ENCODE measurements at regions of chr2 and their contacts with region 1.

Region 1: GRCh38 chr2:112821142-112821541 is 15.4 kb downstream of the IL1B start:
- DNase-seq: peak; percentile 80
- H3K4me3 Mint-ChIP-seq: no peak overlapping the region
- H3K27ac Mint-ChIP-seq: peak overlapping the region; percentile 87
- H3K4me1 Mint-ChIP-seq: peaks cover 28% of the 10 kb centered on the region
- H3K27me3 Mint-ChIP-seq: no peaks in the 10 kb centered on the region

Region 2: DNA sequence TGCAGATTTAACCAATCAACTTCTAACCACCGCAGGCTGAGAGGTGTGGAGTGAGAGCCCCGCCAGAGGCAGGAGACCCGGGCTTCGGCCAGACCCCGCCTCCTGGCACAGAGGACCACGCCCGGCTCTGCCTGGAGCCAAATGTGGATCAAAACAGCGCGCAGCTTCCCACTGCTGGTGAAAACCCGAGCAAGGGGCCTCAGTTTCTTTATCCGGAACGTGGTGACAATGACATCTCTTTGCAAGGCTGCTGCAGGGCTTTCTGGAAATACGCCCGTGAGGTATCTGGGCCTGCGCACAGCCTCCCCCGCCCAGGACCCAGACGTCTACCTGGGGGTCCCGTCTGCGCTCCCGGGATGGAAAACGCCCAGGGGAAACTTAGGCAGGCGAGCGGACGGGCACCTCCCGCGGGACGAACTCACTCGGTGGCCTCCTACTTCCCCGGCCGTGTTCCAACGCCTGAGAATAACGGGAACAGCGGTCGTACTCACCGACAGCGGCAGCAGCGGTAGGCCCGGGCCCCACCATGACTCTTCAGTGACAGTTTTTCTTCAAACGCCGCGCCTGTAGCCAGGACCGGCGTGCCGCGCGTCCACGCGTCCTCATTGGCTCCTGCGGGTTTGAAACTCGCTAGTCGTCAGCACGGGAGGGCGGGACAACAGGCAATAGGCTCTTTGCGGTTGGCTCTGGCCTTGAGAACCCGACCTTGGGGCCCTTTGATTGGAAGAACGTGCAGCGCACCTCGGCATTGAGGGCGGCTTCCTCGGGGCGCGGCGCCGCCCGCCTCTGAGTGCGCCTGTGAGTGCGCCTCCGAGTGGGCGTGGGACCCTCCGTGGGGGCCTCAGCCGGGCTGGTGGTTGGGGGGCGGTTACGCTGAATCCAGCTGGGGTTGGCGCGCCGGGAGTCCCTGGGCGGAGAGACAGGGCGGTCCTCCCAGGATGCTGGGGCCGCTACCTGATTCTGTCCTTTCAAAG is 56.8 kb before region 1 on chr2 and contains the start of gene CKAP2L:
- intact Hi-C with region 1: loop called (anchors 1 kb)
- DNase-seq: peak; percentile 99
- H3K4me3 Mint-ChIP-seq: peak within 1 kb of the TSS; percentile 92
- H3K27ac Mint-ChIP-seq: peak within 1 kb of the TSS; percentile 93
- H3K4me1 Mint-ChIP-seq: peaks cover 47% of the 10 kb centered on the region
- H3K27me3 Mint-ChIP-seq: no peaks in the 10 kb centered on the region
- total RNA-seq, gene CKAP2L: 17.8 and 17.9 TPM in 2 replicates

Region 3: DNA sequence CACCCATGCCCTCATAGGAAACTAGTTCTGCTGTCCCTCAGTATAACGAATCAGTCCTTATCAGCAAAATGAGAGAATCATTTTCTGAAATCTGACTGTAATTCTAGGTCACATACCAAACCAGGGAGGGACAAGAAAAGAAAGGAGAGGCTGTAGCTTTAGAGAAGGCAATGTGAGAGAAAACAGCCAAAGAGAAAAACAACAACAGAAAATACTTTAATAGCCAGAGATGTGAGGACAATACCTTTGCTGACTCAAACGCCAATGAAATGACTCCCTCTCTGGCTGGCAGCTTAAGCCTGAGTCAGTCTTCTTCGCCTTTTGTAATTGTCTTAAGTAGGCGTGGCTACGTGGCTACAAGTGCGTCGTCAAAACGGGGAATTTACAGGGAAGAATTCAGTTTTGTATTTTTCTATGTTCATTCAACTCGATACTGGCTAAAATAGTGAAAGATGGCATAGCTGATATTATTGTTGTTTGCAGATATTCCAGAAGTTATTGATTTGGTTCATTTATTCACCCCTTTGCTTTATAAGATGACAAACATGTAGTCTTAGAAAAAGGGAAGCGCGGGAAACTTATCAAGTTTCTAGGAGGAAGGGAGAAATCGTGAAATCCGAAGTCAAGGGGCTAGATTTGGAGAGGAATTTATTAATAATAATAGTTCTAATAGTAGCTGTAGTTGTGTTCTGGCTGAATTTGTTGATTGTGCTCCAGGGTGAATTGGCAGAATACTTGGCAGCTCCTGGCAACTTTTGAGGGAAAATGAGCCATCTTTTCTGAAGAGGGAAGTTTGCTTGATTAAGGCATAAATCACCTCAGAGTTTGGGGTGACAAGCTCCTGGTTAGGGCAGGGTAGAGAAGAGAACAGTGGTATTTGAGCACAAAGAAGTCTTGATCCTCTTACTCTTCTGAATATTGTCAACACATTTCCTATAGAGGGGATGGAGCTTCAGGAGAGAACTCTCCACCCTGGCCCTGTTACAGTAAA is 36.6 kb before region 1 on chr2 and contains the start of gene IL1A:
- intact Hi-C with region 1: loop called (anchors 5 kb)
- DNase-seq: no peak
- H3K4me3 Mint-ChIP-seq: peak within 1 kb of the TSS; percentile 57
- H3K27ac Mint-ChIP-seq: peak within 1 kb of the TSS; percentile 51
- H3K4me1 Mint-ChIP-seq: peaks cover 10% of the 10 kb centered on the region
- H3K27me3 Mint-ChIP-seq: peaks cover 10% of the 10 kb centered on the region
- total RNA-seq, gene IL1A: 9.4 and 10.2 TPM in 2 replicates

Region 4: DNA sequence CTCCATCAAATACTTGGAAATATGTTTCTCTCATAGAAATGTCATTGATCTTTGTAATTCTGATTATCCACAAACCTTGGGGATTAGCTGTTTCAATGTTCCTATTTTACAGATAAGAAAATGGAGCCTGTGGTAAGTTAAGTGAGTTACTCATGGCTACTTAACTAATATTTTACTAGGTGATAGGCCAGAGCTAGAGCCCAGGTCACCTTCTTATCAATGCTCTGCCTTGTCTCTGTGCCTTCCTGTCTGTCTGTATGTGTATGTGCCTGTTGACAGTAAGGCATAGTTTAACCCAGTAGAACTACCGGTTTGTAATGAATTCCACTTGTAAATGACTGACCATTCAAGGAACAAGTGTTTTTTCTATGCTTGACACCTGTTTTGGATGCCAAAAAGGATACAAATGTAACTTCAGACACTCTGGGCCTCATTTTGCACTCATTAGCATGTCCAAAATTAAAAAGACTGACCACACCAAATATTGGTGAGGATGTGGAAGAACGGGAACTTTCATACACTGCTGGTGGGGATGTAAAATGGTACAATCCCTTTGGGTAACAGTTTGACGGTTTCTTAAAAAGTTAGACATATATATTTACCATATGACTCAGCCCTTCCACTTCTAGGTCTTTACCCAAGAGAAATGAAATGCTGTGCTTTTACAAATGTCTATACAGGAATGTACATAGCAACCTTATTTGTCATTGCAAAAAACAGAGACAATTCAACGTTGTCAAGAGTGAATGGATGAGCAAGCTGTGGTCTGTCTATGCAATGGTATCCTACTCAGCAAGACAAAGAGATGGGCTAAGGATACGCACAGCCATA is 17.2 kb before region 1 on chr2:
- intact Hi-C with region 1: loop called (anchors 1 kb)
- DNase-seq: no peak
- H3K4me3 Mint-ChIP-seq: peak overlapping the region; percentile 50
- H3K27ac Mint-ChIP-seq: peak overlapping the region; percentile 94
- H3K4me1 Mint-ChIP-seq: peaks cover 40% of the 10 kb centered on the region
- H3K27me3 Mint-ChIP-seq: no peaks in the 10 kb centered on the region

Region 5: GRCh38 chr2:112869258-112869885 is 48.2 kb after region 1 on chr2:
- intact Hi-C with region 1: loop called (anchors 5 kb)
- DNase-seq: no peak
- H3K4me3 Mint-ChIP-seq: no peak overlapping the region
- H3K27ac Mint-ChIP-seq: no peak overlapping the region
- H3K4me1 Mint-ChIP-seq: peaks cover 6% of the 10 kb centered on the region
- H3K27me3 Mint-ChIP-seq: peaks cover 45% of the 10 kb centered on the region

Region 6: GRCh38 chr2:112884869-112885505 is 63.8 kb after region 1 on chr2:
- intact Hi-C with region 1: loop called (anchors 1 kb)
- DNase-seq: peak; percentile 94
- H3K4me3 Mint-ChIP-seq: peak overlapping the region; percentile 22
- H3K27ac Mint-ChIP-seq: peak overlapping the region; percentile 21
- H3K4me1 Mint-ChIP-seq: peaks cover 26% of the 10 kb centered on the region
- H3K27me3 Mint-ChIP-seq: no peaks in the 10 kb centered on the region

Region 7: GRCh38 chr2:112916145-112916571 is 95.0 kb after region 1 on chr2:
- intact Hi-C with region 1: loop called (anchors 5 kb)
- DNase-seq: peak; percentile 62
- H3K4me3 Mint-ChIP-seq: peak overlapping the region; percentile 58
- H3K27ac Mint-ChIP-seq: peak overlapping the region; percentile 85
- H3K4me1 Mint-ChIP-seq: peaks cover 32% of the 10 kb centered on the region
- H3K27me3 Mint-ChIP-seq: no peaks in the 10 kb centered on the region

Region 8: DNA sequence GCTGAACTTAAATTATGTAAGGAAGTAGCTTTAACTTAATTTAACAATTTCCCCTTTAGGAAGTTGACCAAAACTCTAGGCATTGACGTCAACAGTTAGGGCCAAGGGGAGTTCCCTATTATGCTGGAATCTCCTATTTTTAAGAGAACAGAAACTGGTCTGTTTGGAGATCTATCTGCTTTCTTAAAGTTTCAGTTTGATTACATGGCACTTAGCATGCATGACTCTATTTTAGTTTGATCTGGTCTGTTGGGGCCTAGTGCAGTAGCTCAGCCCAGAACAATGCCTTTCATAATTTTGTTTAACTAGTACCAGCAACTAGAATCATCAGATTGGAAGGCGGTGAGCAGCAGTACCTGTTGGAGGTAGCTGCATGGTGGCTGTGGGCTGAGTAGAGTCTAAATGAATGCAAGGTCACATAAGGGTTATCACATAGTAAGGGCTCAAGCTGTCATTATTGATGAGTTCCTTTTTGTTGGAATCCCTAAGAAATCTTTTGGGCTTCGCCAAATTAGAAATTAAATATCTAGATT is 555.8 kb after region 1 on chr2:
- intact Hi-C with region 1: no loop called
- DNase-seq: peak; percentile 55
- H3K4me3 Mint-ChIP-seq: no peak overlapping the region
- H3K27ac Mint-ChIP-seq: peak overlapping the region; percentile 57
- H3K4me1 Mint-ChIP-seq: peaks cover 11% of the 10 kb centered on the region
- H3K27me3 Mint-ChIP-seq: peaks cover 21% of the 10 kb centered on the region